Dorsolateral prefrontal cortex (tissue), 120 donors: ENCODE measurements at regions of chr1 and their contacts with region 1.

Region 1: DNA sequence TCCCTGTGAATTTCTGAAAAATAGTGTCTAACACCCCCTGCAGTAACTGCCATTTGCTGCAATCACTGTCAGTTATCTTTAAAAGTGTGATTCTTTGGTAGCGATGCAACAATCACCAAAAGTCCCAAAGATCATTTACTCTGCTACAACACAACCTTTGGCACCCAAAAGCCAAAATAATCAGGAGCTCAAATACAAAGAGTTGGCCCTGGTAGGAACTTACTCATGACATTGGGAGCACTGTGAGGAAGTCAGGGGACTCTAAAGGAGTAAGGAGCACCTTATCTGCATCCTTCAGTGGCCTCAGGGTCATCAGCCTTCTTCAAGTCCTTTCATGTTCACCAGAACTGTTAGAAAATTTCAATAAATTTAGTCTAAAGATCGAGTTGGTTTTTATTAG is 54.6 kb downstream of the SLC16A1 start:
- DNase-seq: no peak
- H3K4me3 ChIP-seq: no peak overlapping the region
- H3K27ac ChIP-seq: no peak overlapping the region
- H3K27me3 ChIP-seq: no peaks in the 10 kb centered on the region
- CTCF ChIP-seq: no peak

Region 2: GRCh38 chr1:112855152-112855828 is 46.1 kb before region 1 on chr1:
- intact Hi-C with region 1: no loop called
- DNase-seq: no peak
- H3K4me3 ChIP-seq: peak overlapping the region in 43 of 59 donors; percentile 13 to 61 (median 44)
- H3K27ac ChIP-seq: no peak overlapping the region
- H3K27me3 ChIP-seq: peaks cover 0 to 9% (median 0%) of the 10 kb centered on the region in 45 donors
- CTCF ChIP-seq: no peak

Region 3: GRCh38 chr1:112929979-112930378 is 28.6 kb after region 1 on chr1:
- intact Hi-C with region 1: loop called in 1 of 2 experiments (anchors 2 kb)
- DNase-seq: no peak
- H3K4me3 ChIP-seq: no peak overlapping the region
- H3K27ac ChIP-seq: peak overlapping the region in 2 of 59 donors; percentile 6 to 83
- H3K27me3 ChIP-seq: no peaks in the 10 kb centered on the region
- CTCF ChIP-seq: no peak